ENCODE measurements at regions of chr18 and their contacts with region 1.

Region 1: DNA sequence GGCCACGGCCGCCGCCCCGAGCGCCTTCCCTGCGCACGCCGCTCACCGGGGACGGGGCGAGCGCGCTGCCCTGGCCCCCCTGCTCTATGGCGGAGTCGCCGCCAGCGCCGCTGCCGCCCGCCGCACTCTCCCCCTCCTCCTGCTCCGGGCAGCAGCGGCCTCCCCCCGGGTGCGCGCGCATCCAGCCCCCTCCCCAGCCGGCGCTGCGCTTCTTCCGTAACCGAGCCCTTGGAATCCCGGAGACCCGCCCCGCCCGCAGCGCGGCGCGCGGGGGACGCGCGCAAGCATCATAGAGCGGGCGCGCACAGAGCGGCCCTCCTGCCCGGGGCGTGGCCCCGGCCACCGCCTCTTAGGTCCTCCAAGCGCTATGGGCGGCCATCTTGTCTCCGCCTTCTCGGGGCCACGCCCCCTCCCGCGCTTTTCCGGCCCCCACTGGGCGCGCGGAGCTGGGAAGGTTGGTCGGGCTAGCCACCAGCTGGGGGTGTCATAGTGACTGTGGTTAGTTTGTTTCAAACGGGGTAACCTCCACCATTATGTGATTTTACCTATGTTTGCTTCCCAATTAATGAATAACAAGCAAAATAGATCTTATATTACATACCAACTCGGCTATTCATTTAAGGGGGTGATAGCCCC is at the start of gene MBD2:
- DNase-seq: peak; percentile 96
- ATAC-seq: peak; percentile 90
- H3K4me3 Mint-ChIP-seq: peak within 1 kb of the TSS; percentile 98
- H3K27ac Mint-ChIP-seq: peak within 1 kb of the TSS; percentile 98
- H3K4me1 Mint-ChIP-seq: peaks cover 46% of the 10 kb centered on the region
- H3K27me3 Mint-ChIP-seq: no peaks in the 10 kb centered on the region
- total RNA-seq, gene MBD2: 134 to 143 TPM

Region 2: GRCh38 chr18:54209471-54210180 is 14.9 kb before region 1 on chr18:
- CTCF ChIA-PET with region 1: interaction called, 13 read pairs
- POLR2A ChIA-PET with region 1: interaction called, 3 read pairs
- intact Hi-C with region 1: no loop called
- DNase-seq: no peak
- ATAC-seq: peak; percentile 88
- H3K4me3 Mint-ChIP-seq: peak overlapping the region; percentile 34
- H3K27ac Mint-ChIP-seq: peak overlapping the region; percentile 88
- H3K4me1 Mint-ChIP-seq: peaks cover 58% of the 10 kb centered on the region
- H3K27me3 Mint-ChIP-seq: no peaks in the 10 kb centered on the region

Region 3: GRCh38 chr18:54261894-54262293 is 37.4 kb after region 1 on chr18:
- CTCF ChIA-PET with region 1: interaction called, 6 read pairs
- POLR2A ChIA-PET with region 1: interaction called, 11 read pairs
- intact Hi-C with region 1: loop called (anchors 1 kb)
- DNase-seq: peak; percentile 82
- ATAC-seq: peak; percentile 71
- H3K4me3 Mint-ChIP-seq: peak overlapping the region; percentile 52
- H3K27ac Mint-ChIP-seq: peak overlapping the region; percentile 90
- H3K4me1 Mint-ChIP-seq: peaks cover 54% of the 10 kb centered on the region
- H3K27me3 Mint-ChIP-seq: no peaks in the 10 kb centered on the region

Region 4: DNA sequence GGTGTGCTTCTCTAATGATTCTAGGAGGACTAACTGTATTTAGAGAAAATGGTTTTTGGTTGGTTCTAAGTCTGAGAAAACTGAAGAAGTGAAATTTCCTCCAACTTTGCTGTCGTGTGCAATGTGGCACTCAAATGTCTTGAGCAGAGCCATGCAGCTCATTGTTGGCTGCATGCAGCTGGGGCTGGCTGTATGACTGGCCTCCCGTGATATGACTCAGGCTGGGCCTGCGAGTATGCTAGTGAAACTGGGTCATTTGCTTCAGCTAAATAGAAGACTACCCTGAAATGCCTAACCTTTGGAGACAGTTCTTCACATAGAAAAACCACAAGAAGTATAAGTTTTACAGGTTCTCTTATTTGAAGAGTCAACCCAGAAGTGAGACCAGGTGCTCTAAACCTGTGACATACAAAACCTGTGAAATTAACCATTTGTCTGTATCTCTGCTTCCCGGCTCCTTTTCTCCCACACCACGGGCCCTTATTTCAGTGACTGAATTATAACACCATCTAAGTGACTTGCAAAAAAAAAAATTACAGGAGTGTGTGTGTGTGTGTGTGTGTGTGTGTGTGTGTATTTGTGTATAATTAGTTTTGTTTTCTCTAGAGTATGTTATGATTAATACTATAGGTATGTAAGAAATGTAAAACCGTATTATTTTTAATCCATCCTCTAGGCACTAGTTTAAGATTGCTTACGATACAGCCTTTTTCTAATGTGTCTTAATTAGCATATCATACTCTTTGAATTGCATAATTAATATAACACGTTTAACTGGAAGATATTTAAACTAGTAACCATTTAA is 60.7 kb after region 1 on chr18:
- CTCF ChIA-PET with region 1: interaction called, 10 read pairs
- POLR2A ChIA-PET with region 1: interaction called, 11 read pairs
- intact Hi-C with region 1: loop called (anchors 1 kb)
- DNase-seq: peak; percentile 90
- ATAC-seq: peak; percentile 98
- H3K4me3 Mint-ChIP-seq: no peak overlapping the region
- H3K27ac Mint-ChIP-seq: peak overlapping the region; percentile 64
- H3K4me1 Mint-ChIP-seq: peaks cover 25% of the 10 kb centered on the region
- H3K27me3 Mint-ChIP-seq: no peaks in the 10 kb centered on the region

Region 5: GRCh38 chr18:54392543-54393023 is 168.1 kb after region 1 on chr18:
- CTCF ChIA-PET with region 1: interaction called, 4 read pairs
- POLR2A ChIA-PET with region 1: interaction called, 5 read pairs
- intact Hi-C with region 1: loop called in 1 of 2 experiments (anchors 1 kb)
- DNase-seq: no peak
- ATAC-seq: peak; percentile 59
- H3K4me3 Mint-ChIP-seq: no peak overlapping the region
- H3K27ac Mint-ChIP-seq: no peak overlapping the region
- H3K4me1 Mint-ChIP-seq: peaks cover 6% of the 10 kb centered on the region
- H3K27me3 Mint-ChIP-seq: peaks cover 6% of the 10 kb centered on the region